B cell (primary cell): ENCODE measurements at regions of chr11 and their contacts with region 1.

Region 1: GRCh38 chr11:119323538-119324033 is 6.7 kb upstream of the MCAM start:
- DNase-seq: peak; percentile 81
- ATAC-seq: no peak
- H3K4me3 ChIP-seq: no peak overlapping the region
- H3K4me3 Mint-ChIP-seq: peak overlapping the region; percentile 44
- H3K27ac ChIP-seq: no peak overlapping the region
- H3K27ac Mint-ChIP-seq: no peak overlapping the region
- H3K4me1 ChIP-seq: peaks cover 9 to 25% of the 10 kb centered on the region in 2 donors
- H3K4me1 Mint-ChIP-seq: peaks cover 26% of the 10 kb centered on the region
- H3K27me3 ChIP-seq: peaks cover 0 to 16% (median 4%) of the 10 kb centered on the region in 4 experiments
- H3K27me3 Mint-ChIP-seq: peaks cover 5% of the 10 kb centered on the region
- CTCF ChIP-seq: peak; percentile 87

Region 2: GRCh38 chr11:119115484-119116234 is 207.9 kb before region 1 on chr11:
- CTCF ChIA-PET with region 1: no interaction called
- POLR2A ChIA-PET with region 1: no interaction called
- intact Hi-C with region 1: no loop called
- DNase-seq: no peak
- ATAC-seq: no peak
- H3K4me3 ChIP-seq: no peak overlapping the region
- H3K4me3 Mint-ChIP-seq: no peak overlapping the region
- H3K27ac ChIP-seq: peak overlapping the region in 1 of 2 donors; percentile 41
- H3K27ac Mint-ChIP-seq: no peak overlapping the region
- H3K4me1 ChIP-seq: peaks cover 3 to 11% of the 10 kb centered on the region in 2 donors
- H3K4me1 Mint-ChIP-seq: peaks cover 12% of the 10 kb centered on the region
- H3K27me3 ChIP-seq: no peaks in the 10 kb centered on the region
- H3K27me3 Mint-ChIP-seq: no peaks in the 10 kb centered on the region
- CTCF ChIP-seq: no peak

Region 3: GRCh38 chr11:119168471-119169281 is 154.9 kb before region 1 on chr11 and contains the start of gene NLRX1:
- CTCF ChIA-PET with region 1: interaction called, 9 read pairs
- POLR2A ChIA-PET with region 1: no interaction called
- intact Hi-C with region 1: loop called (anchors 1 kb)
- DNase-seq: peak; percentile 88
- ATAC-seq: peak; percentile 96
- H3K4me3 ChIP-seq: peak within 1 kb of the TSS; percentile 56 to 80 (median 68)
- H3K4me3 Mint-ChIP-seq: peak within 1 kb of the TSS; percentile 92
- H3K27ac ChIP-seq: peak within 1 kb of the TSS; percentile 10 to 65
- H3K27ac Mint-ChIP-seq: peak within 1 kb of the TSS; percentile 81
- H3K4me1 ChIP-seq: peaks cover 5 to 12% of the 10 kb centered on the region in 2 donors
- H3K4me1 Mint-ChIP-seq: peaks cover 4% of the 10 kb centered on the region
- H3K27me3 ChIP-seq: no peaks in the 10 kb centered on the region
- H3K27me3 Mint-ChIP-seq: no peaks in the 10 kb centered on the region
- CTCF ChIP-seq: peak; percentile 88
- total RNA-seq, gene NLRX1: 9.6 and 10.4 TPM in 2 replicates

Region 4: DNA sequence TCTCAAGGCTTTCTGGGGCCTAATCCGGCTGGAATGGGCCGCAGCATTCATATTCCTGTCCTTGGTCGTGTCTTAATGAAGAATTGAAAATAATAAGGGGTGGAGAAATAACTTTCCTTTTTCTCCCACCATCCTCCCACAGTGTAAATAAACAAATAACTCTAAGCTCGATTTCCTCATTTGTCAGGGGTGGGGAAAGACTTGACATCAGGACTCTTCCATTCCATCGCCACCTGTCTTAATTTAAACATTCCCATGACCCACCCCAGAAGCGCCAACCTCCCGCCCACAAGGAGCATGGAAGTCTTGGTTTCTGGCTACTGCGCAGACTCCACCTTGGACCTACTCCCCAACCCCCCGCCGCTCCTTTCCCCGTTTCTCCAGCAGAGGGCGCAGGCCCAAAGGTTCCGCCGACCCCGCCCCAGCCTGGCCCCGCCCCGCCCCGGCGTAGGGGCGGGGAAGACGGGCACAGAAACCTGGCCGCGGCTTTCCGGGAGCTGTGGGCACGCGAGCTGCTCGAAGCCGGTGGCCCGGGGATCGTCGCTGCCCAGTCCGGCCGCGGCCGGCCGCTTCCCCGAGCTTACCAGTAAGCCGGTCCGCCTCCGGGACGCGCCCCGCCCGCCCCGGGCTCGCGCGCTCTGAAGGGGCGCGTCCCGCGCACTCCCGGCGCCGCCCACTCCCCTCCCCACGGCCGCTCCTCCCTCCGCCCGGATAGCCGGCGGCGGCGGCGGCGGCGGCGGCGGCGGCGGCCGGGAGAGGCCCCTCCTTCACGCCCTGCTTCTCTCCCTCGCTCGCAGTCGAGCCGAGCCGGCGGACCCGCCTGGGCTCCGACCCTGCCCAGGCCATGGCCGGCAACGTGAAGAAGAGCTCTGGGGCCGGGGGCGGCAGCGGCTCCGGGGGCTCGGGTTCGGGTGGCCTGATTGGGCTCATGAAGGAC is 117.7 kb before region 1 on chr11 and contains the start of gene CBL:
- CTCF ChIA-PET with region 1: interaction called, 21 read pairs
- POLR2A ChIA-PET with region 1: no interaction called
- intact Hi-C with region 1: loop called (anchors 1 kb)
- DNase-seq: peak; percentile 96
- ATAC-seq: peak; percentile 88
- H3K4me3 ChIP-seq: peak within 1 kb of the TSS; percentile 93 to 98 (median 96)
- H3K4me3 Mint-ChIP-seq: peak within 1 kb of the TSS; percentile 97
- H3K27ac ChIP-seq: peak within 1 kb of the TSS; percentile 60 to 84
- H3K27ac Mint-ChIP-seq: peak within 1 kb of the TSS; percentile 94
- H3K4me1 ChIP-seq: peaks cover 18 to 20% of the 10 kb centered on the region in 2 donors
- H3K4me1 Mint-ChIP-seq: peaks cover 33% of the 10 kb centered on the region
- H3K27me3 ChIP-seq: no peaks in the 10 kb centered on the region
- H3K27me3 Mint-ChIP-seq: no peaks in the 10 kb centered on the region
- CTCF ChIP-seq: peak; percentile 78
- total RNA-seq, gene CBL: 35.2 and 38.7 TPM in 2 replicates

Region 5: GRCh38 chr11:119284344-119285157 is 39.0 kb before region 1 on chr11:
- CTCF ChIA-PET with region 1: interaction called, 10 read pairs
- POLR2A ChIA-PET with region 1: no interaction called
- intact Hi-C with region 1: no loop called
- DNase-seq: peak; percentile 70
- ATAC-seq: peak; percentile 74
- H3K4me3 ChIP-seq: no peak overlapping the region
- H3K4me3 Mint-ChIP-seq: no peak overlapping the region
- H3K27ac ChIP-seq: no peak overlapping the region
- H3K27ac Mint-ChIP-seq: peak overlapping the region; percentile 8
- H3K4me1 ChIP-seq: peaks cover 3 to 5% of the 10 kb centered on the region in 2 donors
- H3K4me1 Mint-ChIP-seq: peaks cover 6% of the 10 kb centered on the region
- H3K27me3 ChIP-seq: no peaks in the 10 kb centered on the region
- H3K27me3 Mint-ChIP-seq: no peaks in the 10 kb centered on the region
- CTCF ChIP-seq: peak; percentile 70

Region 6: DNA sequence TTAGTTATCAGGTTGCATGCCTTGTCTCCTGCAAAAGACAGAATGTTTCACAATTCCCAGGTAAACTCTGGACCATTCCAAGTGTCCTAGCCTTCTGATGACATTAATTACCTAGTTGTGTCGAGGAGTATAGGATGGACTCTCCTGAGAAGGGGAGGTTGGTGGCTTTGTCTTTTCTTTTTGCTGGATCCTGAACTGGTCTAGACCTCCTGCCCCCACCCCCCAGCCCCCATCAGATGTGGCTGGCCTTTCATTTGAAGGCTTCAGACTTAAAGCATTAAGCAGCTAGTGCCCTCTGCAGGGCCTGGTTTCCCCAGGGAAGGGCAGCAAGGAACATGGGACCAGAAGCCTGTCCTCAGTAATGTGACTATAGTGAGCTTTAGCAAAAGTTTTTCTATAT is 16.4 kb before region 1 on chr11:
- CTCF ChIA-PET with region 1: interaction called, 15 read pairs
- POLR2A ChIA-PET with region 1: no interaction called
- intact Hi-C with region 1: no loop called
- DNase-seq: no peak
- ATAC-seq: no peak
- H3K4me3 ChIP-seq: no peak overlapping the region
- H3K4me3 Mint-ChIP-seq: no peak overlapping the region
- H3K27ac ChIP-seq: no peak overlapping the region
- H3K27ac Mint-ChIP-seq: no peak overlapping the region
- H3K4me1 ChIP-seq: no peaks in the 10 kb centered on the region
- H3K4me1 Mint-ChIP-seq: no peaks in the 10 kb centered on the region
- H3K27me3 ChIP-seq: no peaks in the 10 kb centered on the region
- H3K27me3 Mint-ChIP-seq: no peaks in the 10 kb centered on the region
- CTCF ChIP-seq: no peak

Region 7: GRCh38 chr11:119334174-119334930 is 10.8 kb after region 1 on chr11 and contains the start of gene RNF26:
- CTCF ChIA-PET with region 1: interaction called, 45 read pairs
- POLR2A ChIA-PET with region 1: interaction called, 3 read pairs
- intact Hi-C with region 1: loop called (anchors 1 kb)
- DNase-seq: peak; percentile 96
- ATAC-seq: peak; percentile 98
- H3K4me3 ChIP-seq: peak within 1 kb of the TSS; percentile 74 to 94 (median 88)
- H3K4me3 Mint-ChIP-seq: peak within 1 kb of the TSS; percentile 99
- H3K27ac ChIP-seq: peak within 1 kb of the TSS; percentile 59 to 83
- H3K27ac Mint-ChIP-seq: peak within 1 kb of the TSS; percentile 95
- H3K4me1 ChIP-seq: peaks cover 10 to 19% of the 10 kb centered on the region in 2 donors
- H3K4me1 Mint-ChIP-seq: peaks cover 27% of the 10 kb centered on the region
- H3K27me3 ChIP-seq: peaks cover 0 to 11% (median 7%) of the 10 kb centered on the region in 4 experiments
- H3K27me3 Mint-ChIP-seq: peaks cover 16% of the 10 kb centered on the region
- CTCF ChIP-seq: no peak
- total RNA-seq, gene RNF26: 21.3 and 21.8 TPM in 2 replicates

Region 8: GRCh38 chr11:119403021-119403420 is 79.4 kb after region 1 on chr11:
- CTCF ChIA-PET with region 1: no interaction called
- POLR2A ChIA-PET with region 1: no interaction called
- intact Hi-C with region 1: no loop called
- DNase-seq: no peak
- ATAC-seq: no peak
- H3K4me3 ChIP-seq: no peak overlapping the region
- H3K4me3 Mint-ChIP-seq: no peak overlapping the region
- H3K27ac ChIP-seq: no peak overlapping the region
- H3K27ac Mint-ChIP-seq: no peak overlapping the region
- H3K4me1 ChIP-seq: no peaks in the 10 kb centered on the region
- H3K4me1 Mint-ChIP-seq: peaks cover 3% of the 10 kb centered on the region
- H3K27me3 ChIP-seq: peaks cover 0 to 6% (median 1%) of the 10 kb centered on the region in 4 experiments
- H3K27me3 Mint-ChIP-seq: peaks cover 31% of the 10 kb centered on the region
- CTCF ChIP-seq: no peak

Region 9: GRCh38 chr11:119843877-119844276 is 520.3 kb after region 1 on chr11:
- CTCF ChIA-PET with region 1: no interaction called
- POLR2A ChIA-PET with region 1: no interaction called
- intact Hi-C with region 1: no loop called
- DNase-seq: no peak
- ATAC-seq: no peak
- H3K4me3 ChIP-seq: no peak overlapping the region
- H3K4me3 Mint-ChIP-seq: no peak overlapping the region
- H3K27ac ChIP-seq: no peak overlapping the region
- H3K27ac Mint-ChIP-seq: no peak overlapping the region
- H3K4me1 ChIP-seq: no peaks in the 10 kb centered on the region
- H3K4me1 Mint-ChIP-seq: no peaks in the 10 kb centered on the region
- H3K27me3 ChIP-seq: peaks cover 0 to 7% (median 0%) of the 10 kb centered on the region in 4 experiments
- H3K27me3 Mint-ChIP-seq: peaks cover 18% of the 10 kb centered on the region
- CTCF ChIP-seq: no peak